GM12878 (cell line): ENCODE measurements at regions of chr10 and their contacts with region 1.

Region 1: DNA sequence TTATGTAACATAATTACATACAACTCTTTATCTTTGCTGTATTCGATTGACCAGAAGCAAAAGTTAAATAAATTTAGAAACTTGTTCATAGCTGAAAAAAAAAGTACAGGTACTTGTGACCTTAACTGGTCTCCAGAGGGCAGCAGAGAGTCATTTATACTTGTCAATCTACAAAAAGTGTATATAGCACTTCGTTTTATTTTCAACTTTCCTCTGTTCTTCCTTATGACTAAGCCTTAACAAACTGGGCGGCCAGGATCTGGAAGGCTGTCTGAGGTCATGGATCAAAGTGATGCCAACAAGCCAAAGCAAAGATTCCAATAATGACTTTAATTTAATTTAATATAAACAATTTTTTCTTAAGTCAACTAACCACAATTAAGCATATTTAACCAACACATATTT is 29.8 kb downstream of the C10orf67 start:
- DNase-seq: peak; percentile 28
- ATAC-seq: peak; percentile 61
- H3K4me3 ChIP-seq: no peak overlapping the region
- H3K27ac ChIP-seq: no peak overlapping the region
- H3K4me1 ChIP-seq: no peaks in the 10 kb centered on the region
- H3K27me3 ChIP-seq: no peaks in the 10 kb centered on the region
- CTCF ChIP-seq: peak; percentile 55 to 70 (median 62)
- EP300 ChIP-seq: no peak
- POLR2A ChIP-seq: no peak
- RAD21 ChIP-seq: peak; percentile 80

Region 2: DNA sequence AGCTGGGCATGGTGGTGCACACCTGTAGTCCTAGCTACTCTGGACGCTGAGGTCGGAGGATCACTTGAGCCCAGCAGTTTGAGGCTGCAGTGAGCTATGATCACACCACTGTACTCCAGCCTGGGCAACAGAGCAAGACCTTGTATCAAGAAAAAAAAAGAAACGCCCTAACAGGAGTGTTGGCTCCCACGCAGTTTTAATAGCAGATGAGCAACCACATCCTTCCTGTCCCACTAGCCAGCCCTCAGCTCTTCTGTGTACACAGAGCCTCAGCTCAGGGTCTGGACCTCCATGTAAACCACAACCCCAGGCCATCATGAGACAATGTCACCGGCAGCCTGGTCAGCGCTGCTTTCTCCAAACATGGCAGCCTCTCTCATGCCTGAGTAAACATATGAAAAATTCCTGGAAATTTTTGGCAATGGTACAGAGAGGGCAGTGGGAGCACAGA is 708.6 kb before region 1 on chr10:
- CTCF ChIA-PET with region 1: no interaction called
- POLR2A ChIA-PET with region 1: no interaction called
- RAD21 ChIA-PET with region 1: no interaction called
- SMC1A ChIA-PET with region 1: no interaction called
- in situ Hi-C with region 1: no loop called
- intact Hi-C with region 1: no loop called
- DNase-seq: peak; percentile 93
- ATAC-seq: peak; percentile 88
- H3K4me3 ChIP-seq: peak overlapping the region; percentile 33
- H3K27ac ChIP-seq: peak overlapping the region; percentile 81
- H3K4me1 ChIP-seq: peaks cover 70% of the 10 kb centered on the region
- H3K27me3 ChIP-seq: no peaks in the 10 kb centered on the region
- CTCF ChIP-seq: no peak
- EP300 ChIP-seq: peak; percentile 79 to 89
- POLR2A ChIP-seq: peak; percentile 65
- RAD21 ChIP-seq: 0 out of 2 replicates have a peak, but pooled peaks have one; percentile 9

Region 3: DNA sequence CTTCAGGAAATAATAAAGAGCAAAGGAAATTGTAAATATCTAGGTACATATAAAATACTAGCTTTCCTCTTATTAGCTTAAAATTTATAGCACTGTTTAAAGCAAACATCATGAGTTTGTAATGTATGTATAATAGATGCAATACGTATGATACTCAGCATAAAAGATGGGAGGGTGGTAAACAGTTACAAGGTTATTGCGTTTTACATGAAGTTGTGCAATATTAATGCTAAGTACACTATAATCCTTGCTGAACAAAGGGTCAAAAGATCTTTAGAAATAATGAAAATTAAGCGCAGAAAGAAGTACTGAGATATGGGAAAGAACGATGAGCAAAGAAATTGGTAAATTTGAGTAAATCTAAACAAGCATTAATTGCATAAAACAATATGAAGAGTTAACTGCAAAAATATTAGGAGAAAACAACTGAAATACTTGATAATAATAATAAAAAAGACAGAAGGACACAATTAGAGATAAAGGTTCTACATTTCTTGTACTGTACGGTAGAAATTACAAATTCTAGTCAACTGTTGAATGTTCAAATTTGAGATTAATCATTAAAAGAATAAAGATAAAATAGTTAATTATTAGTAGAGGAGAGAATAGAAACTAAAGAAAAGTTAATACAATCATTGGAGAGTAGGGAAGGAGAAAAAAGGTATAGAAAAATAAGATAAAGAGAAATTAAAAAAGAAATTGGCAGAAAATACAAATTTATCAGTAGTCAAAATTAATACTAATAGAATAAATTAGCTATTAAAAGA is 11.9 kb after region 1 on chr10:
- CTCF ChIA-PET with region 1: interaction called, 16 read pairs
- POLR2A ChIA-PET with region 1: no interaction called
- RAD21 ChIA-PET with region 1: no interaction called
- SMC1A ChIA-PET with region 1: interaction called, 3 read pairs
- in situ Hi-C with region 1: no loop called
- intact Hi-C with region 1: no loop called
- DNase-seq: no peak
- ATAC-seq: no peak
- H3K4me3 ChIP-seq: no peak overlapping the region
- H3K27ac ChIP-seq: no peak overlapping the region
- H3K4me1 ChIP-seq: no peaks in the 10 kb centered on the region
- H3K27me3 ChIP-seq: no peaks in the 10 kb centered on the region
- CTCF ChIP-seq: no peak
- EP300 ChIP-seq: no peak
- POLR2A ChIP-seq: no peak
- RAD21 ChIP-seq: no peak

Region 4: GRCh38 chr10:23613900-23614299 is 299.1 kb after region 1 on chr10:
- CTCF ChIA-PET with region 1: no interaction called
- POLR2A ChIA-PET with region 1: interaction called, 10 read pairs
- RAD21 ChIA-PET with region 1: no interaction called
- SMC1A ChIA-PET with region 1: no interaction called
- in situ Hi-C with region 1: no loop called
- intact Hi-C with region 1: no loop called
- DNase-seq: no peak
- ATAC-seq: peak; percentile 68
- H3K4me3 ChIP-seq: 0 out of 2 replicates have a peak overlapping the region, but pooled peaks have one; percentile 10
- H3K27ac ChIP-seq: no peak overlapping the region
- H3K4me1 ChIP-seq: peaks cover 4% of the 10 kb centered on the region
- H3K27me3 ChIP-seq: no peaks in the 10 kb centered on the region
- CTCF ChIP-seq: no peak
- EP300 ChIP-seq: no peak
- POLR2A ChIP-seq: no peak
- RAD21 ChIP-seq: no peak

Region 5: GRCh38 chr10:23702977-23703414 is 388.2 kb after region 1 on chr10:
- CTCF ChIA-PET with region 1: interaction called, 23 read pairs
- POLR2A ChIA-PET with region 1: no interaction called
- RAD21 ChIA-PET with region 1: interaction called, 5 read pairs
- SMC1A ChIA-PET with region 1: interaction called, 3 read pairs
- in situ Hi-C with region 1: loop called (anchors 5 kb)
- intact Hi-C with region 1: loop called (anchors 1 kb)
- DNase-seq: no peak
- ATAC-seq: peak; percentile 98
- H3K4me3 ChIP-seq: no peak overlapping the region
- H3K27ac ChIP-seq: no peak overlapping the region
- H3K4me1 ChIP-seq: no peaks in the 10 kb centered on the region
- H3K27me3 ChIP-seq: no peaks in the 10 kb centered on the region; a peak in 1 of 4 replicates
- CTCF ChIP-seq: peak; percentile 69 to 78 (median 75)
- EP300 ChIP-seq: no peak
- POLR2A ChIP-seq: no peak
- RAD21 ChIP-seq: peak; percentile 82

Region 6: DNA sequence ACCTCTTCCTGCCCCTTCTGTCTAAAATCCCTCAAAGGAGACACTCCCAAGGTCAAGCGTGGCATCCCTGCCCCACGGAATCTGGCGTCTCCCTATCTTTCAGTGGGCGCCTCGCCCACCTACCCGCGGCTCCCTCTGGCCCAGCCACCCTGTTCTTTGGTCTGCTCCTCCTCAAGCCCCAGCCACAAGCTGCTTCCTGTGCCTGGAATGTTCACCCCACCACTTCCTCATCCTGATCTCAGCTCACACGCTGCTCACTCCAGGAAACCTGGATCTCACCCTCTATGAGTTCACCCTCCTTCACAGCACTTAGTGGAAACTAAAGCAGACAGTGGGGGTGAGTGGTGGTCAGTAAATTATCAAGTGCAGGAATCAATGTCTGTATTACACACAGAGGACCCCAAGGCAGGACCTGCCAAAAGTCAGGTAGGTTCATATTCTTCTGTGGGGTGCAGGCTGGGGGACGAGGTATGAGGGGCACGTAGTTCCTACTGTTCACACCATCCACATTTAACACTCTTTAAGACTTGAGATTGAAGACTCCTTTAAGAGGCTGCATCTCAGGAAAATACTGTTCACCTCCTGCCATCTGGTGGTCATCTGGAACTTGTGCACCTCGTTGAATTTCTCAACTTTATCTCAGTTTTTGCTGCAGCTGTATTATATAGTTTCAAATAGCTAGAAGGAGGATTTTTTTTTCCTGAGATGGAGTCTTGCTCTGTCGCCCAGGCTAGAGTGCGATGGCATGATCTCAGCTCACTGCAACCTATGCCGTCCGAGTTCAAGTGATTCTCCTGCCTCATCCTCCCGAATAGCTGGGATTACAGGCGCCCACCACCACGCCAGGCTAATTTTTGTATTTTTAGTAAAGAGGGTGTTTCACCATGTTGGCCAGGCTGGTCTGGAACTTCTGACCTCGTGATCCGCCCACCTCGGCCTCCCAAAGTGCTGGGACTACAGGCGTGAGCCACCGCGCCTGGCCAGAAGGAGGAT is 1242.2 kb after region 1 on chr10:
- CTCF ChIA-PET with region 1: interaction called, 10 read pairs
- POLR2A ChIA-PET with region 1: no interaction called
- RAD21 ChIA-PET with region 1: interaction called, 4 read pairs
- SMC1A ChIA-PET with region 1: interaction called, 8 read pairs
- in situ Hi-C with region 1: no loop called
- intact Hi-C with region 1: no loop called
- DNase-seq: no peak
- ATAC-seq: peak; percentile 77
- H3K4me3 ChIP-seq: no peak overlapping the region
- H3K27ac ChIP-seq: no peak overlapping the region
- H3K4me1 ChIP-seq: no peaks in the 10 kb centered on the region
- H3K27me3 ChIP-seq: no peaks in the 10 kb centered on the region; a peak in 1 of 4 replicates
- CTCF ChIP-seq: peak; percentile 61 to 65 (median 61); a peak in 5 of 6 replicates
- EP300 ChIP-seq: no peak
- POLR2A ChIP-seq: no peak
- RAD21 ChIP-seq: peak; percentile 75